ENCODE measurements at regions of chr14 and their contacts with region 1.

Region 1: GRCh38 chr14:22478670-22479069 is 110.4 kb downstream of the DAD1 start:
- DNase-seq: no peak
- ATAC-seq: no peak
- H3K4me3 Mint-ChIP-seq: peak overlapping the region; percentile 42
- H3K27ac Mint-ChIP-seq: peak overlapping the region; percentile 85
- H3K4me1 Mint-ChIP-seq: peaks cover 98% of the 10 kb centered on the region
- H3K27me3 Mint-ChIP-seq: no peaks in the 10 kb centered on the region
- CTCF ChIP-seq: no peak

Region 2: DNA sequence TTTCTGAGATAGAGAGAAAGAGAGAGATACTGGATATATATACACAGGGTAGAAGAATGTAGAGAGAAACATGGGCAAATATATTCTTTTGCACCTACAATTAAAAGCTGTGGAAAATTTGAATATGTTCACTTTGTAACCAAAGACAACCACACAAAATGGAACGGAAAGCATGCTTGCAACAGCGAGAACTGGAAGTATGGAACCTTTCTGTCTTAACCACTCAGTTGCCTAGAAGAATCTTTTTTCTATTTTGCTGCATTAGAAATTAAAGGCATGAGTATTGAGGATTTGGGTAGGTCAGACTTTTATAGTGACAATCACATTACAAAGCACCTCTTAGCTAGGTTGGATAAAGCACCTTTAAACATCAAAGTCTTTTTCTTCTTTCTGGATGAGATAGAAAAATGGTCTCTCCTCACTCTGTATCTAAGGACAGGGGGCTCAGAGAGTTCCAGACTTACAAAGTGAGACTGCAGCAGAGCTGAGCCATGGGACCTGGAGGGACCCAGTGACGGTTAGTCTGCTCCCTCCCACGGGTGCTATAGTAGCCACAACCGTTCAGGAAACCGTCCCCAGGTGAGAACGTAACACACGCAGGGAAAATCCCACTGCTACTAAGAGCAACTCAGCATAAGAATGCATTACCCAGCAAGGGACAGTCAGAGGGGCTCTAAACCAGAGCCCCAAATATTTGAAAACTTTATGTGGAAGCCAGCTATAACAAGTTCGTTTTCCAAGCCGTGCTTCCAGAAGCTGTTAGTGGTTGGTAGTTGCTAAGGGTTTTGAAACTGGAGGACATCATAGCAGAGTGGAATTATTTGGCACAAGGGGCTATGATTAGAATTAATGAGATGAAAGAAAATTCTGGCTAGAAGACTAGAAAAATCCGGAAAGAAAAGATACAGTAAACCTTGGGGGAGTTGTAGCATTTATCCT is 13.3 kb after region 1 on chr14:
- CTCF ChIA-PET with region 1: interaction called, 32 read pairs
- POLR2A ChIA-PET with region 1: interaction called, 27 read pairs
- intact Hi-C with region 1: loop called (anchors 2 kb)
- DNase-seq: no peak
- ATAC-seq: peak; percentile 37
- H3K4me3 Mint-ChIP-seq: peak overlapping the region; percentile 42
- H3K27ac Mint-ChIP-seq: peak overlapping the region; percentile 88
- H3K4me1 Mint-ChIP-seq: peaks cover 98% of the 10 kb centered on the region
- H3K27me3 Mint-ChIP-seq: no peaks in the 10 kb centered on the region
- CTCF ChIP-seq: no peak

Region 3: GRCh38 chr14:23269193-23269592 is 790.5 kb after region 1 on chr14:
- CTCF ChIA-PET with region 1: no interaction called
- POLR2A ChIA-PET with region 1: no interaction called
- intact Hi-C with region 1: no loop called
- DNase-seq: no peak
- ATAC-seq: no peak
- H3K4me3 Mint-ChIP-seq: no peak overlapping the region
- H3K27ac Mint-ChIP-seq: no peak overlapping the region
- H3K4me1 Mint-ChIP-seq: no peaks in the 10 kb centered on the region
- H3K27me3 Mint-ChIP-seq: peaks cover 13% of the 10 kb centered on the region
- CTCF ChIP-seq: no peak

Region 4: GRCh38 chr14:24366721-24367513 is 1888.2 kb after region 1 on chr14:
- CTCF ChIA-PET with region 1: no interaction called
- POLR2A ChIA-PET with region 1: no interaction called
- intact Hi-C with region 1: no loop called
- DNase-seq: peak; percentile 100
- ATAC-seq: peak; percentile 83
- H3K4me3 Mint-ChIP-seq: peak overlapping the region; percentile 85
- H3K27ac Mint-ChIP-seq: peak overlapping the region; percentile 80
- H3K4me1 Mint-ChIP-seq: peaks cover 33% of the 10 kb centered on the region
- H3K27me3 Mint-ChIP-seq: peaks cover 5% of the 10 kb centered on the region
- CTCF ChIP-seq: no peak